Esophagus muscularis mucosa (tissue), 4 donors: ENCODE measurements at regions of chr7 and their contacts with region 1.

Region 1: DNA sequence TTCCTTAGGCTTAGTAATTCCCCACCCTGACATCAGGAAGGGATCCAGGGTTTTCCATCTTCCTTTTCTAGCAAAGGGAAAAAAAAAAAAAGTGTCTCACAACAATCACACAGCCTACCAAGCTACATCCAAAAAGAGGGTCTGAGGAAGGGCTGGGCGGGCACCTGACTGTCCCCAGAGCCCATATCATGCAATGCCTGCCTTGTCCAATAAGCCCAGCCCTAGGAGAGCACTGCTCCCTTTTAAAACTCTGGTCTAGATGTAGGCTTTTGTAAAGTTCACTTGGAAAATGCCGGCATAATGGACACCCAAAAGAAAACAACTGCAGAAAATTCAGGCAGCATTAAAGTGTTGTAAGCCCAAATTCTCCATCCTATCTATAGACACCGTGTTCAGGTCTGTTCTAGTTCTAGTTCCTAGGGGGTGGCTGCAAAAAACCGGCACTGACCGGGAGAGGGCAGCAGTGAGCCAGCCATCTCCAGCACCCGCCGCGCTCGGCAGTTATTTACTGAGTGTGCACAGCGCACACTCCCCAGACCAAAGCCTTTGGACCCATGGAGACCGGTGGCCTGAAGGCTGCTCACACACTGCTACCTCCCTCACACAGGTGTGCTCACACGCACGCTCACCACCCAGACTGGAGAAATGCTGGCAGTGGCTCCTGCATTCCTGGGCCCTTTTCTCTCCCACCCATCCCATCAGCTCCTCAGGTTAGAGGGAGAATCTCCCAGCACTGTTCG is 48.7 kb downstream of the PODXL start:
- DNase-seq: peak; percentile 95
- H3K4me3 ChIP-seq: peak overlapping the region in 1 of 4 donors; percentile 5
- H3K27ac ChIP-seq: peak overlapping the region in 1 of 4 donors; percentile 7
- H3K4me1 ChIP-seq: peaks cover 31 to 46% (median 44%) of the 10 kb centered on the region in 4 donors
- H3K27me3 ChIP-seq: no peaks in the 10 kb centered on the region
- CTCF ChIP-seq: peak; percentile 87 to 95 (median 92)
- EP300 ChIP-seq: no peak
- POLR2A ChIP-seq: no peak

Region 2: DNA sequence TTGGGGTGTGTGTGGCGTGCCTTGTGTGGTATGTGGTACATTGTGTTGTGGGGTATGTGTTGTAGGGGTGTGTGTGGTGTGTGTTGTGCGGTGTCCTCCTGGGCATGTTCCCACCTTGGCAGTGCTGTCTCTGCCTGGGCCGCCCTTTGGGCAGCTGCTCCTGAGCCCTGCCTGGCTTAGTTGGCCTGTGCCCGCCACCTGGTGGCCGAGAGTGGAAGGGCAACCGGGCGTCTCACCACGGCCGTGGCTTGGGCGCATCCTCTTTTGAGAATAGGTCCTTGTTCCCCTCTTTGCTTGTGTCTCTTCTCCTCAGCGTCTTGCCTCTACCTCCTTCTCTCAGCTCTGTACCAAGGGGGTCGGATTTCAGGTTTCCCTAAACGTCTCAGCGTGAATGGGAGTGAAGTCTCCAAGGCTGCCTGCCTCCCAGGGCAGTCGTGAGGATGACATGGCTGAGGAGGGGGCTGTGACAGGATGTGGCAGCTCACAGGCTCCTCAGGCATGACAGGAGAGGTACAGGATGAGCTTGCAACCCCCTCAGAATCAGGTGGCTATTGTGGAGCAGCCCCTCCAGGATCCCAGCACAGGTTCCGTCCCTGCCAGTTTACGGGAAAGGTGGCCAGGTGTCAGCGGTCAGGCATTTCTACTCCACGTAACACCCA is 147.0 kb after region 1 on chr7:
- intact Hi-C with region 1: loop called (anchors 1 kb)
- DNase-seq: peak; percentile 96
- H3K4me3 ChIP-seq: no peak overlapping the region
- H3K27ac ChIP-seq: no peak overlapping the region
- H3K4me1 ChIP-seq: peaks cover 0 to 11% (median 3%) of the 10 kb centered on the region in 4 donors
- H3K27me3 ChIP-seq: peaks cover 0 to 3% (median 0%) of the 10 kb centered on the region in 4 donors
- CTCF ChIP-seq: peak; percentile 91 to 93 (median 93)
- EP300 ChIP-seq: no peak
- POLR2A ChIP-seq: no peak